Prostate gland (tissue), 2 donors: ENCODE measurements at regions of chr1 and their contacts with region 1.

Region 1: DNA sequence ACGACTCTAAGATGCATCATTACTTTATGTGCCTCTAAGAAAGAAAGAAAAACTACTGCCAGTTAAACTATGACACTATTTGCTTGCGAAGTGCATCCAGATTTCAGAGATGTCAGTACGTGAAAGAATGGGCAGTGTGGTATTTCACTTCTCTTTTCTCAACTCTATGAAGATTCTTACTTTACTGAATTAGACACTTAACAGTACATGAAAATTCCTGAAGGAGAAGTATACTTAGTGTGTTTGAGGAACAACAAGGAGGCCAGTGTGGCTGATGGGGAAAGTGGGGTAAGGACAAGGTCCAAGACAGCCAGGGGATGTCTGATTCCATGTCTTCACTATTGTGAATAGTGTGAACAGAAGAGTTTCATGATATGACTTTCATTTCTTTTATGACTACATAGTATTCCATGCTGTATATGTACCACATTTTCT is 53.9 kb upstream of the HSD17B7 start:
- DNase-seq: no peak
- H3K4me3 ChIP-seq: no peak overlapping the region
- H3K27ac ChIP-seq: no peak overlapping the region
- H3K4me1 ChIP-seq: peaks cover 8% of the 10 kb centered on the region
- H3K27me3 ChIP-seq: no peaks in the 10 kb centered on the region
- CTCF ChIP-seq: no peak
- POLR2A ChIP-seq: no peak

Region 2: GRCh38 chr1:161933592-161934588 is 802.8 kb before region 1 on chr1:
- intact Hi-C with region 1: no loop called
- DNase-seq: no peak
- H3K4me3 ChIP-seq: no peak overlapping the region
- H3K27ac ChIP-seq: no peak overlapping the region
- H3K4me1 ChIP-seq: no peaks in the 10 kb centered on the region
- H3K27me3 ChIP-seq: no peaks in the 10 kb centered on the region
- CTCF ChIP-seq: no peak
- POLR2A ChIP-seq: no peak

Region 3: GRCh38 chr1:162633081-162633762 is 103.4 kb before region 1 on chr1:
- intact Hi-C with region 1: loop called (anchors 5 kb)
- DNase-seq: no peak
- H3K4me3 ChIP-seq: peak overlapping the region; percentile 7 to 9
- H3K27ac ChIP-seq: peak overlapping the region; percentile 71 to 72
- H3K4me1 ChIP-seq: no peaks in the 10 kb centered on the region
- H3K27me3 ChIP-seq: no peaks in the 10 kb centered on the region
- CTCF ChIP-seq: no peak
- POLR2A ChIP-seq: no peak

Region 4: DNA sequence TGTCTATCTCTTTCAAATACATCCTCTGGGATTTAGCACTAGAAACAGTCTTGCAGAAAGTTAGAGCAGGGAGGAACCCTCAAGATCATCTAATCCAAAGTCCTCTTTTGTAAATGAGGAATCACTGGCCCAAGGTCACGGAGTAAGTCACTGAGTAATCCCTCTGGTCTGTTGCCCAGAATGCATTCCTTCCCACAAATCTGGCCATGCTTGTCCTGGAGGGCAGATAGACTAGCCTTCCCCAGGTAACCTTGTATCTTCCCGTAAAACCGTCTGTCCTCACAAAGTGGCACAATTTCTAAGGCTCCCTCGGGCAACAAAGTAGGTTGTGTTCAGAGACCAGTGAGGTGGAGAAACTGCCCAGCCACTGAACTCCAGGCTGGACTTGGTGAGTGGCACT is 58.2 kb before region 1 on chr1:
- intact Hi-C with region 1: loop called (anchors 10 kb)
- DNase-seq: peak; percentile 36
- H3K4me3 ChIP-seq: no peak overlapping the region
- H3K27ac ChIP-seq: no peak overlapping the region
- H3K4me1 ChIP-seq: no peaks in the 10 kb centered on the region
- H3K27me3 ChIP-seq: no peaks in the 10 kb centered on the region
- CTCF ChIP-seq: no peak
- POLR2A ChIP-seq: no peak

Region 5: DNA sequence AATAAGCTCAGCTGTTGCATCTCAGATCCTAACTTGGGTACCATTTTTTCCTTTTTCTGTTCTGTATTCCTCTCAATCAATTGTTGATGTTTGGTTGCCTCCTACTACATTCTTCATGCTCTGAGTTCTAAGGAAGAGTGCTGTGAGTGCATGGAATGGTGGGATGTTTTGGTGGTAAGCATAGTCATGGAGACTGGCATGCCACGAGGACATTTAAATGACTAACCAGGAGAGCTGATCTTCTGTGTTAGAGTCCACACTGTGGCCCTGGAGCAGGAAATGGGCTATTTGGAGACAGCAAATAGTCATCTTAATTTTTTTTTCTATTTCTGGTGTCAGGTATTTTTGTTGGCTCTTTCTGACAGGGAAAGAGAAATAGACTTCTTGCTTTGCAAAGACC is 15.7 kb before region 1 on chr1:
- intact Hi-C with region 1: no loop called
- DNase-seq: no peak
- H3K4me3 ChIP-seq: no peak overlapping the region
- H3K27ac ChIP-seq: no peak overlapping the region
- H3K4me1 ChIP-seq: no peaks in the 10 kb centered on the region
- H3K27me3 ChIP-seq: no peaks in the 10 kb centered on the region
- CTCF ChIP-seq: no peak
- POLR2A ChIP-seq: no peak

Region 6: DNA sequence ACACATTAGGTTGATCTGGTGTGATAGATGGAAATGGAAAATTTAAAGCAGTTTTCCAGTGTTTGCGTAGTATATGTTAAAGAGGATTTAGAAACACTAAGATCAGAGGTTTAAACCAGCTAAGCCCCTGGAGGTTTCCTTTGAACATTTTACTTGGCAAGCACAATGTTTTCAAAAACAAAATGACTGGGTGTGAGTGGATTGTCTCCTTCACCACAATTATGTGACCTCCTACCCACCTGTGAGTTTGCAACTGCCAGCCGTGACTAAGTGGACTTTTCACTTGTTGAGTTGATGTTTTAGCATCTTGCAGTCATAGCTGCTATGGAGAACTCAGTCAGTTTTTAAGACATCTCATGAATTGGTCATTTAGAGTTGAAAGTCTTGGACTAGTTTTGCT is 119.6 kb after region 1 on chr1:
- intact Hi-C with region 1: no loop called
- DNase-seq: no peak
- H3K4me3 ChIP-seq: no peak overlapping the region
- H3K27ac ChIP-seq: no peak overlapping the region
- H3K4me1 ChIP-seq: no peaks in the 10 kb centered on the region
- H3K27me3 ChIP-seq: no peaks in the 10 kb centered on the region
- CTCF ChIP-seq: no peak
- POLR2A ChIP-seq: no peak

Region 7: GRCh38 chr1:162987866-162988265 is 251.2 kb after region 1 on chr1:
- intact Hi-C with region 1: no loop called
- DNase-seq: no peak
- H3K4me3 ChIP-seq: no peak overlapping the region
- H3K27ac ChIP-seq: no peak overlapping the region
- H3K4me1 ChIP-seq: no peaks in the 10 kb centered on the region
- H3K27me3 ChIP-seq: no peaks in the 10 kb centered on the region
- CTCF ChIP-seq: no peak
- POLR2A ChIP-seq: no peak